ENCODE measurements at regions of chr4 and their contacts with region 1.

Region 1: GRCh38 chr4:10157478-10158332 is 41.1 kb upstream of the WDR1 start:
- DNase-seq: peak; percentile 62
- H3K4me3 Mint-ChIP-seq: no peak overlapping the region
- H3K27ac Mint-ChIP-seq: no peak overlapping the region
- H3K4me1 Mint-ChIP-seq: peaks cover 29% of the 10 kb centered on the region
- H3K27me3 Mint-ChIP-seq: no peaks in the 10 kb centered on the region

Region 2: DNA sequence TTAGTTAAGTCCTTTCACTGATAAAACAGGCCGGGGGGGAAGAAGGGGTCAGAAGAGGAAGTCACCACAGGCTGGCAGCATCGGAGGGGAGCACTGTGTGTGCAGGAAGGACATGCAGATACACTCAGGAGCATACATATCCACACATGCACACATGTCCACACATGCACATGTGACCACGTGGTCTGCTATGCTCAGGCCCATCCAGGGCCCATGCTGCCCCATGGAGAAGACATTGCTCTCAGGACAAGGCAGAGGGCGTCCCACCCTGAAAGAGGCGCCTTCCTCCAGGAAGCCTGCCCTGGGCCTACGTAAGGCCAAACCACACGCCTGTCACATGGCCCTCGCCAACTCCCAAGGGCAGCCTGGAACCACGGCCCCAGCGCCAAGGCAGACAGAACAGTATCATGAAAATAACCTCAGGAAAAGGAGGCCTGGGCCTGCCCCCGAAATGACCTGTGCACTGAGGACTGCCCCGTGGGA is 56.9 kb before region 1 on chr4:
- CTCF ChIA-PET with region 1: no interaction called
- POLR2A ChIA-PET with region 1: no interaction called
- intact Hi-C with region 1: no loop called
- DNase-seq: peak; percentile 39
- H3K4me3 Mint-ChIP-seq: peak overlapping the region; percentile 18
- H3K27ac Mint-ChIP-seq: peak overlapping the region; percentile 92
- H3K4me1 Mint-ChIP-seq: peaks cover 98% of the 10 kb centered on the region
- H3K27me3 Mint-ChIP-seq: no peaks in the 10 kb centered on the region

Region 3: DNA sequence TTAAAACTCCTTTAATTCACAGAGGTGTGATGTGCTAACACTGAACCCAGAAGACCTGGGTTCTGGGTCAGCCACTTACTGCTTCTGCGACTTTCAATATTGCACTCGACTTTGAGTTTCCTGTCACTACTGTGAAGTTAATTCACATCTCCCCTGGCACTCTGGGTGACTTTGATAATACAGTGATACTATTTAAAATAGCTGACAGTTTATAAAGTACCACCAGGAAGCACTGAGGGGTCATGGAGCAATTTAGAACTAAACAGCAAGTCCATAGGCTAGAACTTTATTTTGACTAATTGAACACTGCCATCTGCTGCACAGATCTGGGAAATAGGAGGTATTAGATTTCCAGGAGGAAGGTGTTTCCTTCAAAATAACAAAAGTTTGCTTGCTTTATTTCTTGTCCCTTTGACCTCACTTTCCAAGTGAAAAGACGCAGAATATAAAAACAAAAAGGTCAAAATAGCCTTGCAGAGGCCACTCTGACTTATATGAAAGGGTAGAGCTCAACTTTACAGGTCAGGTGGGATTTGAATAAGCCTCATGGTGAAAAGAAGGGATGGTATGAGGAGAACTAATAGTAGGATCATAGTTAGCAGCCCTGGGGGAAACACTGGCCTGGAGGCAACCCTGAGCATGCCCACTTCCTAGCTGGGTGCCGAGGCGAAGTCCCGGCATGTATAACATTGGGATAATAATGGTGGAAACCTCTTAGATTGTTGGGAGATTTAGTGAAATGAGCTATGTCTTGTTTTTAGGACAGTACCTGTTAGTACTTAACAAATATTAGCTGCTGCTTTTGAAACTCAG is 246.1 kb after region 1 on chr4:
- CTCF ChIA-PET with region 1: interaction called, 16 read pairs
- POLR2A ChIA-PET with region 1: no interaction called
- intact Hi-C with region 1: loop called (anchors 1 kb)
- DNase-seq: no peak
- H3K4me3 Mint-ChIP-seq: no peak overlapping the region
- H3K27ac Mint-ChIP-seq: no peak overlapping the region
- H3K4me1 Mint-ChIP-seq: no peaks in the 10 kb centered on the region
- H3K27me3 Mint-ChIP-seq: no peaks in the 10 kb centered on the region

Region 4: DNA sequence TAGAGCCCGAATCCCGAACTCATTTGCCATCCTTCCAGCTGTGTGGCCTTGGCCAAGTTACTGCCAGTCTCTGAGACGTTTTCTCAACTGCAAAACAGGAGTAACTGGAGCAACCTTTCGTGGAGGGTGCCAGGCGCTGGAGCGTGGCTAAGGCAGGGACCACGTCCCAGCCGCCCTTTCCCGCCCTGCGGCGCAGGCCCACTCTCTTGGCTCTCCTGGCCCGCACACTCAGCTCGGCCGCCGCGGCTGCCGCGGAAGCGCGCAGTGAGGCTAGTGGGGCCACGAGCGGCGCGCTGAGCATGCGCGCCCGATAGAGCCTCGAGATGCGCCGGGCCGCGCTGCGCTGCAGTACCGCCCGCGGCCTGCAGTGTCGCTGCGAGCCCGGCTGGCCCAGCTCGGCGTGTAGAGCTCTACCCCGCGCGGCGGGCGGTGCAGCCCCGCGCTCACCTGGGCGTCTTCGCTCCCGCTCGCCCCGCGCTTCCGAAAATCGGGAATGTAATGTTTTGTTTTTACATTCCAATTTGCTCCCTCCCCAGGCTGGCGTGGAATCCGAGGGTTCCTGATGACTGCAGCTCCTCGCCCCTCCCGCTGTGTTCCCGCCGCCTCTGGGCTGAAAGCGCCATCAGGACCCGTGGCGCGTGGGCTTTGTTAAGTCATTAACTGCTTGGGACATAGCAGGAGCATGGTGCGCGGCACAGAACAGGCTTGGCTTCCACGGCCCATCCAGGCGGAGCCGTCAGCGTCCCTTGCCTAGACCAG is 303.6 kb after region 1 on chr4:
- CTCF ChIA-PET with region 1: interaction called, 7 read pairs
- POLR2A ChIA-PET with region 1: no interaction called
- intact Hi-C with region 1: loop called (anchors 2 kb)
- DNase-seq: peak; percentile 78
- H3K4me3 Mint-ChIP-seq: peak overlapping the region; percentile 72
- H3K27ac Mint-ChIP-seq: no peak overlapping the region
- H3K4me1 Mint-ChIP-seq: peaks cover 25% of the 10 kb centered on the region
- H3K27me3 Mint-ChIP-seq: peaks cover 33% of the 10 kb centered on the region